ENCODE measurements at regions of chr7 and their contacts with region 1.

Region 1: DNA sequence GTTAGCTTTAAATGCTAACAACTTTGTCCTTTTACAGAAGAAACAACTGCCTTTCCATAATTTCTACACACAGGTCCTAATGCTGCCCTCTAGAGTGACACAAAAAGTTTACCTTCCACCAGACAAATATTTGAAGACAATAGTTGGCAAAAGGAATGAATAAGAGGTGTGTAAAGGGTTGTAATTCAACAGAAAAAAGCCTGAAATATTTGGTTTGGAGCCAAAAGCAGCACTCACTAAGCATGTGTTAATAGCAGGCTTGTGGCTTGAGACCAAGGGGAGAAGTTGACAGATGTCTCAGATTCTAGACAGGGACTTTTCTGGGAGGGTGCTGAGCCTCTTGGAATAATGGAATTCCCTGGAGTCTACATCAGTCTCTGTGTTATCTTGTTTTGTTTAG is 156.2 kb upstream of the GALNT17 start:
- DNase-seq: no peak
- ATAC-seq: no peak
- H3K4me3 ChIP-seq: no peak overlapping the region
- H3K27ac ChIP-seq: no peak overlapping the region
- H3K4me1 ChIP-seq: no peaks in the 10 kb centered on the region
- H3K27me3 ChIP-seq: no peaks in the 10 kb centered on the region
- CTCF ChIP-seq: no peak

Region 2: DNA sequence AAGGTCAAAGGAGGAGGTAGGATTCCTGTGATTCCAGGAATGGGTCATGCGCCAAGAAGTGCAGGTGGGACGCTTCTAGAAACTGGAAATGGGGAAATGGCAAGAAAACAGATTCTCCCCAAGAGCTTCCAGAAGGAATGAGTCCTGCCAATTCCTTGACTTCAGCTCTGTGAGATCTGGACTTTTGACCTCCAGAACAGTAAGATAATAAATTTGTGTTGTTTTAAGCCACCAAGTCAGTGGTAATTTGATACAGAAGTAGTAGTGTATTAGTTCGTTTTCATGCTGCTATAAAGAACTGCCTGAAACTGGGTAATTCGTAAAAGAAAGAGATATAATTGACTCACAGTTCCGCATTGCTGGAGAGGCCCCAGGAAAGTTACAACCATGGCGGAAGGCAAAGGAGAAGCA is 22.4 kb before region 1 on chr7:
- CTCF ChIA-PET with region 1: no interaction called
- POLR2A ChIA-PET with region 1: no interaction called
- in situ Hi-C with region 1: no loop called
- intact Hi-C with region 1: loop called (anchors 1 kb)
- DNase-seq: no peak
- ATAC-seq: no peak
- H3K4me3 ChIP-seq: no peak overlapping the region
- H3K27ac ChIP-seq: no peak overlapping the region
- H3K4me1 ChIP-seq: no peaks in the 10 kb centered on the region
- H3K27me3 ChIP-seq: no peaks in the 10 kb centered on the region
- CTCF ChIP-seq: no peak

Region 3: DNA sequence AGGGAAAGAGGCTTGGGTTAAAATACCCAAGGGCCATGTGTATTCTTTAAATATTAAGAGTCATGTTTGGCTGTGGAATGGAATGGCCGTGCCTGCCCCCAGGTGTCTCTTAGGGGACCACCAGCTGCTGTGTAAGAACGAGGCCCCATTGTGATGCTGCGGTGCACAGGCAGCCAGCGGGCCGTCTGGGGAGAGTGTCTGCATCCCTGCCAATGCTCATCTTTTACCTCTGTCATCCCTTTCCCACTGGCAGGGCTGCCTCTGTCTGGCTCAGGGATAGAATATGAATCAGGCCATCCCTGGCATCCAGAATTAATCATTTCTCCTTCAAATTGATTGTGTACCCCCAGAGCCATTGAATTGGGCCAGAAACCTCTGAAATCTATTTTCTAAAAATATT is 18.4 kb after region 1 on chr7:
- CTCF ChIA-PET with region 1: no interaction called
- POLR2A ChIA-PET with region 1: no interaction called
- in situ Hi-C with region 1: no loop called
- intact Hi-C with region 1: no loop called
- DNase-seq: no peak
- ATAC-seq: no peak
- H3K4me3 ChIP-seq: no peak overlapping the region
- H3K27ac ChIP-seq: no peak overlapping the region
- H3K4me1 ChIP-seq: no peaks in the 10 kb centered on the region
- H3K27me3 ChIP-seq: no peaks in the 10 kb centered on the region
- CTCF ChIP-seq: no peak

Region 4: GRCh38 chr7:72234086-72234485 is 1258.3 kb after region 1 on chr7:
- CTCF ChIA-PET with region 1: no interaction called
- POLR2A ChIA-PET with region 1: no interaction called
- in situ Hi-C with region 1: no loop called
- intact Hi-C with region 1: no loop called
- DNase-seq: no peak
- ATAC-seq: no peak
- H3K4me3 ChIP-seq: no peak overlapping the region
- H3K27ac ChIP-seq: no peak overlapping the region
- H3K4me1 ChIP-seq: no peaks in the 10 kb centered on the region
- H3K27me3 ChIP-seq: no peaks in the 10 kb centered on the region
- CTCF ChIP-seq: no peak

Measured in Panc1 (cell line).